ENCODE measurements at regions of chr10 and their contacts with region 1.

Region 1: DNA sequence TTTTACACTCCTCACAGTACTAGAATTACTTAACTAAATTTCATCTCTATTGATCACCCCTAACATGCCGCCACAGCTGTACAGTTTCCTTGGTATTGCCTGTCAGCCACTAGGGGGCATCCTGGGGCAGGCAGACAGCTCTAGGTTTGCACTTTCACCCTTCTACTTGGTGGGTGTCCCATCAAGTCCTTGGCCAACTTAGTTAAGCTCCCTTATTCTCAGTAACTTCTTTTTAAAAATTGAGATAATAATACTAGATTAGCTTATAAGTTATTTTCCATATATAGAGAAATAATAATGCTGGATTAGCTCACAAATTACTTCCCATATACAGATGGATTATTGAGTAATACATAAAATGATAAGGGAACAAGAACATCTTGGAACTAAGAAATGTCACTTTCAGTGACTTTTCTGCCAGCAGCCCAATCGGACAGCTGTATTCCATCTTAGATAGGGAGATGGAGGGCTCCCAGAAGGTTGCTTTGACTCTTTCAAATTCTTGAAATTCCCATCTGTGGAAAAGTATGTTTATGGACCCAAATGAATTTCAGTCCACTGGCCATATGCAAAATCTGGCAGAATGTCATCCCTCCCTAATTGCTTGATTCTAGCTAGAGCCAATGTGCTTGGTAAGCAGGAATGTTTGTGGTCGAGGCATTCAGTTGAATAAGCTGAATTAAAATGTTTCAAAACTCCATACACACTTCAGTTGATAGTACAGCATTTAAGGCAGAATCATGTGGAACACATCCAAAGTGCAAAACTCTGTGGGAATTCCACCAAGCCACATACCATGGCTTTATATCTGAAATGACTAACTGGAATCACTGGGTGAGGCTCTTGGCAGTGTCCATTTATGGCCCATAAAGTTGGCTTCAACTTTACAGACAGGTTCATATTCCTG is 309.7 kb downstream of the CSTF2T start:
- DNase-seq: peak; percentile 16 to 18
- ATAC-seq: peak; percentile 38 to 78 (median 72)
- H3K4me3 ChIP-seq: no peak overlapping the region
- H3K27ac ChIP-seq: peak overlapping the region in 3 of 10 donors; percentile 2 to 33 (median 10)
- H3K4me1 ChIP-seq: peaks cover 0 to 26% (median 14%) of the 10 kb centered on the region in 9 donors
- H3K27me3 ChIP-seq: no peaks in the 10 kb centered on the region
- CTCF ChIP-seq: peak; percentile 46 to 86 (median 78)

Region 2: DNA sequence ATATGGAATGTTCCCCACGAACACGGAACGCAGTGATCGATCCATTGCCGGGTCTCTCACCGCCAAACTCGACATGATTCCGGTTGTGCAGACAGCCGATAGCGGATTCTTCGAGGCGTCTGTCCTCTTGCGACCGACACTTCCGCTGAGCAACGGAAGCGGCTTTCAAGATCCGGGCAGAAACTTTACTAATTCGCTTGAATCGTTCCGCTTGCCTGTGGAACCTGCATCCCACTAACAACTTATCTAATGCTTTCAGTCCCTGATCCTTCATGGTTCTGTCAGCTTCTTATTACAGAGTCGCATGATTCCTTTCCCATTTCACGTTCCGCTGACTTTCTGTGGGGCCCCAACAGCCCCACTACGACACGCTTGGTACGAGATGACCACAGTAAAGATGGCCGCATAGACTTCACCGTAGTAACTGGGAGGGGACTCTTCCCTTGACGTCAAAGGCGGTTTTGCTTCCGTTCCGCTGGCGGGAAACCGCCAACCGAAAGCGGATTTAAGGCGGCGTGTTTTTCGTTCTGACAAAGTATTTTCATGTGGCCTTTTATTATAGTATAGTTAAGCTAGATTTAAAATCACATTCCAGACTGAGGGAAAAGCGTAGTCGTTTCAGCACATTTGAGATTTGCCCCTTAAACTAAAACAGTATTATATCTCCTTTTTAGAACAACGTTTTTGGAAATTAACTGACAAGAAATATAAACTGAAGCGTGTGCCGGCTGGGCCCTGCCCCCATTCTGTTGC is 310.0 kb after region 1 on chr10 and contains the start of gene CSTF2T:
- intact Hi-C with region 1: loop called in 1 of 10 experiments (anchors 10 kb)
- DNase-seq: peak; percentile 79 to 94
- ATAC-seq: peak; percentile 96 to 99 (median 97)
- H3K4me3 ChIP-seq: peak within 1 kb of the TSS; percentile 62 to 84 (median 72)
- H3K27ac ChIP-seq: peak within 1 kb of the TSS; percentile 88 to 99 (median 94)
- H3K4me1 ChIP-seq: peaks cover 2 to 53% (median 43%) of the 10 kb centered on the region in 9 donors
- H3K27me3 ChIP-seq: no peaks in the 10 kb centered on the region
- CTCF ChIP-seq: no peak
- total RNA-seq, gene CSTF2T: 20.6 to 31.6 (median 23.1) TPM

Region 3: GRCh38 chr10:51960494-51960895 is 570.8 kb after region 1 on chr10:
- intact Hi-C with region 1: loop called in 2 of 10 experiments (anchors 10 kb)
- DNase-seq: peak in 1 of 2 donors; percentile 15
- ATAC-seq: peak in 7 of 8 donors; percentile 39 to 69 (median 59)
- H3K4me3 ChIP-seq: no peak overlapping the region
- H3K27ac ChIP-seq: no peak overlapping the region
- H3K4me1 ChIP-seq: peaks cover 0 to 24% (median 4%) of the 10 kb centered on the region in 9 donors
- H3K27me3 ChIP-seq: no peaks in the 10 kb centered on the region
- CTCF ChIP-seq: peak; percentile 17 to 69 (median 51)